Left cardiac atrium (tissue), 4 donors: ENCODE measurements at regions of chr6 and their contacts with region 1.

Region 1: GRCh38 chr6:35688581-35689322 is at the start of gene FKBP5:
- DNase-seq: peak; percentile 97
- ATAC-seq: peak; percentile 96 to 97
- total RNA-seq, gene FKBP5: 101 to 117 TPM

Region 2: DNA sequence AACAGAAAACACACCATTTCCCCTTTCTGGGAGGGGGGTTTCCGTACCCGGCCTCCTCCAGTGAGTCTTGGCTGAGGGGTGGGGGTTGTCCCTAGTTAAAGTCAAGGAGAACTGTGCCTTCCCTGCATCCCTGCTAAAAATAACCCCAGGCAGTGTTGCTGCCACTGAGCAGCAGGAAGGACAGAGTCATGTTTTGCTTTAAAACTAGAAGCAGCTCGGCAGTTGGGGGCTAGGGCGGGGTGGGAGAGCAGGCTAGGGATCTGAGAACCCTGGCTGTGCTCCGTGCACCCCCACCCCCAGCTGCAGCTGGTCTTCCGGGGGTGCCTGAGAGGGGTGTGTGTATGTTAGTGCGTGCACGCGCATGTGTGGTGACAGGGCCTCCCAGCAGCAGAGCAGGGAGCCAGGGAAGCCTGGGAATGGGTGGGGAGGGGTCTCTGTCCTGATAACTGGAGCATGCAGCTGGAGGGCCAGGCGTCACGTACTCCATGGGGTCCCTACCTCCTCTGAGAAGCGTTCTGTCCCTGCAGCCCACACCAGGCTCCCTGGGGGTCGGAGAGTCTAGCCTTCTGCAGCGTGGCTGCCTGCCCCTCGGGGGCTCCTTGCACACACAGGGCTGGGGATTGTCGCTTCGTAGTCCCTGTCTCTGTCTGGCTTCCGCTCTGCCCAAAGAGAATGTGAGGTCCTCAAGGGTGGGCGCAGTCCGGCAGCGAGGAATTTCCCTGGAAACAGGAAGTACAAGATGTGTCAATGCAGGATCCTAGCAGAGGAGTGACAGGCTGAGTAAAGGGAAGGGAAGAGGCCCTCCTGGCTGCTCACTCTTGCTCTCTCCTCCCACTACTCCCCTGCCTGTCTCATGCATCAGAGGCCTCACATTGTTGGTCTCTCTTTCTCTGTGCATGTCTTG is 31.3 kb after region 1 on chr6:
- intact Hi-C with region 1: loop called (anchors 2 to 5 kb)
- DNase-seq: peak; percentile 72
- ATAC-seq: peak; percentile 68 to 77

Region 3: DNA sequence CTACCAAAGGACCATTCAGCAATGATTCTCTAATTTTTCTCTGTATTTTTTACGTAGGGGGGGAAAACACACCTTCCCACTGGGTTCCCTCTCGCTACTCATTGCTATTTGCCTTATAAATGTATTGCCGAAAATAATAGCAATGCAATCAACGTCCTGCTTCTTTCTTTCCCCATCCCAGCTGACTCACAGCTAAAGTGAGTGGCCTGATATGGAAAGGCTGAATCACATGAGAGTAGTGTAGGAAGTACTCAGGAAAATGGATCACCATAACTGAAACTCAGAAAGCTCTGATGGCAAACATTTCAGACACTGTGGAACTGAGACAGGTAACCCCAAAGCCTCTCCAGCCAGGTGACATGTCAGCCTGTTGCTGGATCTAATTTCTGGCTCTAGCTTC is 281.4 kb after region 1 on chr6:
- intact Hi-C with region 1: no loop called
- DNase-seq: no peak
- ATAC-seq: no peak